Posterior vena cava (tissue), 2 donors: ENCODE measurements at regions of chr13 and their contacts with region 1.

Region 1: GRCh38 chr13:37645181-37645740 is 46.7 kb upstream of the POSTN start:
- DNase-seq: no peak

Region 2: GRCh38 chr13:37791699-37792098 is 146.4 kb after region 1 on chr13:
- intact Hi-C with region 1: no loop called
- DNase-seq: no peak

Region 3: DNA sequence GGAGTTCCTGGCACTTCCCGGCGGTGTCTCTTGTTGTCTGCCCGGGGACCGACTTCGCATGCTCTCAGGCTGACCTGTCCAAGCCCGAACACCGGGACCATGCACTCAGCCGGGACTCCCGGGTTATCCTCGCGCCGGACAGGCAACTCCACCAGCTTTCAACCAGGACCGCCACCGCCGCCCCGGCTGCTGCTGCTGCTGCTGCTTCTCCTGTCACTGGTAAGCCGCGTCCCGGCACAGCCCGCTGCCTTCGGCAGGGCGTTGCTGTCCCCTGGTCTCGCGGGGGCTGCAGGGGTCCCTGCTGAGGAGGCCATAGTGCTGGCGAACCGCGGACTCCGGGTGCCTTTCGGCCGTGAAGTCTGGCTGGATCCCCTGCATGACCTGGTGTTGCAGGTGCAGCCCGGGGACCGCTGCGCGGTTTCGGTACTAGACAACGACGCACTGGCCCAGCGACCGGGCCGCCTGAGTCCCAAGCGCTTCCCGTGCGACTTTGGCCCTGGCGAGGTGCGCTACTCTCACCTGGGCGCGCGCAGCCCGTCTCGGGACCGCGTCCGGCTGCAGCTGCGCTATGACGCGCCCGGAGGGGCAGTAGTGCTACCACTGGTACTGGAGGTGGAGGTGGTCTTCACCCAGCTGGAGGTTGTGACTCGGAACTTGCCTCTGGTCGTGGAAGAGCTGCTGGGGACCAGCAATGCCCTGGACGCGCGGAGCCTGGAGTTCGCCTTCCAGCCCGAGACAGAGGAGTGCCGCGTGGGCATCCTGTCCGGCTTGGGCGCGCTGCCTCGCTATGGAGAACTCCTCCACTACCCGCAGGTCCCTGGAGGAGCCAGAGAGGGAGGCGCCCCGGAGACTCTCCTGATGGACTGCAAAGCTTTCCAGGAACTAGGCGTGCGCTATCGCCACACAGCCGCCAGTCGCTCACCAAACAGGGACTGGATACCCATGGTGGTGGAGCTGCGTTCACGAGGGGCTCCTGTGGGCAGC is 1042.3 kb after region 1 on chr13:
- intact Hi-C with region 1: loop called in 1 of 2 experiments (anchors 2 kb)
- DNase-seq: peak; percentile 82